ENCODE measurements at regions of chr3 and their contacts with region 1.

Region 1: GRCh38 chr3:87503900-87504508 is 227.6 kb upstream of the POU1F1 start:
- DNase-seq: no peak
- ATAC-seq: peak; percentile 70
- H3K4me3 Mint-ChIP-seq: no peak overlapping the region
- H3K27ac Mint-ChIP-seq: no peak overlapping the region
- H3K4me1 Mint-ChIP-seq: peaks cover 7% of the 10 kb centered on the region
- H3K27me3 Mint-ChIP-seq: no peaks in the 10 kb centered on the region
- CTCF ChIP-seq: peak; percentile 67

Region 2: DNA sequence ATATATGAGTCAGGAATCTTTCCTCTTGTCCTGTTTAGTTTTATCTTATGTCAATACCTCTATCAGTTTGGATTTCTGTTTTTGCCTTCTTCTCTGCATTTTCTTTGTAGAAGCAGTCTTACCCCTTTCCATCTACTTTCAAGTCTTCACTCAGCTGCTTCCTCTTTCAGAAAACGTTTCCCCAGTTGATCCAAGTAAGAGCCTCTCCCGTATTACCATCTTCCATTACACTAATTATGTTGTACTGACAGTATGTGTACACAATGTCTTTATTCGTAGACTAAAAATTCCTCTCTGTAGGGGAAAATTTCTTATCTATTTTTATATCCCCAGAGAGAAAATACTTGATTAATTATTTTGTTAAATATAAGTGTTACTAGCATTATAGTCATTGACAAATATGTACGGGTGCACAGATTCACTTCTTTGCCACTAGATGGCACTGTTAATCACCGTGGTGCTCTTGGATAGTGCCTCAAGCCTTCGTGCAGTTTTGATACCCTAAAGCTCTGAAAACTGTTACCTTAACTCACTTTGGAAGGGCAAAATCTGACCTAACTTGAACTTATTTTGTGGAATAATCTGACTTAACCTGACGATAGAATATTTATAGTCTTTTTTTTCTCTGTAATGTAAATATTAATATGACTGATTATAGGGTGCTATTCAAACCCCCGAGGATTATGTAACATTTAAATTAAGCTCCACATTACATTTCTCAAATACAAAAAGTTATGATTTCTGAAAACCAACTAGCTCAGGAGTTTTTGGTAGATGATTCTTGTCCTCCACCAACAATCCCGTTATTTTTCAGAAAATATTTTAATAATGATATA is 153.4 kb before region 1 on chr3:
- CTCF ChIA-PET with region 1: interaction called, 19 read pairs
- POLR2A ChIA-PET with region 1: no interaction called
- DNase-seq: no peak
- ATAC-seq: peak; percentile 90
- H3K4me3 Mint-ChIP-seq: no peak overlapping the region
- H3K27ac Mint-ChIP-seq: no peak overlapping the region
- H3K4me1 Mint-ChIP-seq: peaks cover 7% of the 10 kb centered on the region; the same call in 1 of the 2 replicates
- H3K27me3 Mint-ChIP-seq: no peaks in the 10 kb centered on the region
- CTCF ChIP-seq: peak; percentile 58